ENCODE measurements at regions of chr20 and their contacts with region 1.

Region 1: GRCh38 chr20:9467995-9468394 is 46.4 kb upstream of the LAMP5 start:
- DNase-seq: peak in 4 of 10 donors; percentile 10 to 21 (median 16)

Region 2: DNA sequence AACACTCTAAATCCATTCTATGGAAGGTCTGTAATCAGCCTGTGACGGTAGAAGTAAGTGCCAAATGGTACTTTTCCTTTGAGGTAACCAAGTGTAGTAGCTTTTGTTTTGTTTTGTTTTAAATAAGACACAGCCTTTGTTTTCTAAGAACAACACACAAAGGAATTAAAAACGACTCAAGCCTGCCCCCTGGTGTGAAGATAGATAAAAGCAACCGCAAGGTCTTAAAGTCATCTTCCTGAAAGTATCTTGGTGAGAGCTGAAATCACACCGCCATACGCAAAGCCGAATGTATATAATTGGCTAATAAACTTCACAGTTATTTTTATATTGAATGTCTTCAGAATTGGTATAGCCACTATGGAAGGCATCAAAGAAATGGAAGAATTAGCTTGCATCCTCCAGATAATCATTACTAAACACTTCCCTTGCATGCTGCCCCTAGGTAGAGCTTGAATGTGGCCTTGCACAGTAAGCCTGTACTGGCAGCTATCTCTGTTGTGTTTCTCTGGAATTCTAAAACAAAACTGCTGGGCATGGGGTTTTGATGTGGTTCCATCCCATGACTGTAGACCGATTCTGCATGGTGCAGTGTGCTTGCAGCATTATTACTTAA is 142.0 kb after region 1 on chr20:
- intact Hi-C with region 1: loop called (anchors 2 kb)
- DNase-seq: peak in 5 of 10 donors; percentile 24 to 74 (median 71)